Caco-2 (cell line): ENCODE measurements at regions of chr5 and their contacts with region 1.

Region 1: DNA sequence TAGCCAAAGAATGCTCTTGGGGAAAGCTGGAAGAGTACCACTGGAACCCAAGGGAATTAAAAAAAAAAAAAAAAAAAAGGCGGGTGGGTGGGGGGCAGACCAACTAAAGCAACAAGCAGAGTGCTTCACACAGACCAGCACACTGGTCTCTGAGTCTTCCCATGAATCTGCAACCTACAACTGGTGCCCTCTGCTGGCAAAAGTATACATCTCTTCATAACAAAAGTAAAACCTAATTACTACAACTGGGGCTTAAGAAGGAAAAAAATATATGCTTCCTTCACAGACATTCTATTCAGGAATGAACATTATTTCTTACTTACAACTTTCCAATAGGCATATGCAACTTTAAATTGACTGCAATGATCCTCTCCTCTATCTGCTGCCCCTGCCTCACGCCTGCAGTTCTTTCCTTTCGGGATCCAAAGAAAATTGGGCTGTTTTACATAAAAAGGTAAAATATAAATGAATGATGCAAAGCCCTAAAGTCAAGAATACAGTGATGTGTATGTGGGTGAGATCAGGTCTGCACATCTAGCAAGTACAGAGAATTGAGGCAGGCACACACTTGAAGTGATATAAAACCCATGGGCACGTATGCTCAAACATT is 7.2 kb upstream of the KLHL3 start:
- DNase-seq: peak; percentile 65 to 70
- H3K4me3 ChIP-seq: no peak overlapping the region
- H3K4me3 Mint-ChIP-seq: no peak overlapping the region
- H3K27ac Mint-ChIP-seq: no peak overlapping the region
- H3K4me1 ChIP-seq: peaks cover 14% of the 10 kb centered on the region; the same call in 1 of the 2 replicates
- H3K4me1 Mint-ChIP-seq: no peaks in the 10 kb centered on the region
- H3K27me3 ChIP-seq: no peaks in the 10 kb centered on the region
- H3K27me3 Mint-ChIP-seq: no peaks in the 10 kb centered on the region
- CTCF ChIP-seq: peak; percentile 63 to 65

Region 2: GRCh38 chr5:137635521-137635921 is 107.6 kb before region 1 on chr5:
- CTCF ChIA-PET with region 1: interaction called, 78 read pairs
- POLR2A ChIA-PET with region 1: no interaction called
- intact Hi-C with region 1: no loop called
- DNase-seq: no peak
- H3K4me3 ChIP-seq: no peak overlapping the region
- H3K4me3 Mint-ChIP-seq: no peak overlapping the region
- H3K27ac Mint-ChIP-seq: no peak overlapping the region
- H3K4me1 ChIP-seq: no peaks in the 10 kb centered on the region
- H3K4me1 Mint-ChIP-seq: no peaks in the 10 kb centered on the region
- H3K27me3 ChIP-seq: no peaks in the 10 kb centered on the region
- H3K27me3 Mint-ChIP-seq: peaks cover 4% of the 10 kb centered on the region
- CTCF ChIP-seq: no peak

Region 3: GRCh38 chr5:137660349-137660817 is 82.8 kb before region 1 on chr5:
- CTCF ChIA-PET with region 1: interaction called, 93 read pairs
- POLR2A ChIA-PET with region 1: interaction called, 3 read pairs
- intact Hi-C with region 1: loop called (anchors 1 kb)
- DNase-seq: peak; percentile 77 to 78
- H3K4me3 ChIP-seq: no peak overlapping the region
- H3K4me3 Mint-ChIP-seq: no peak overlapping the region
- H3K27ac Mint-ChIP-seq: no peak overlapping the region
- H3K4me1 ChIP-seq: no peaks in the 10 kb centered on the region
- H3K4me1 Mint-ChIP-seq: no peaks in the 10 kb centered on the region
- H3K27me3 ChIP-seq: no peaks in the 10 kb centered on the region
- H3K27me3 Mint-ChIP-seq: peaks cover 2% of the 10 kb centered on the region
- CTCF ChIP-seq: peak; percentile 70 to 88

Region 4: GRCh38 chr5:137754126-137754960 is 11.2 kb after region 1 on chr5 and contains the start of gene HNRNPA0:
- CTCF ChIA-PET with region 1: interaction called, 18 read pairs
- POLR2A ChIA-PET with region 1: no interaction called
- intact Hi-C with region 1: no loop called
- DNase-seq: peak; percentile 97 to 98
- H3K4me3 ChIP-seq: peak within 1 kb of the TSS; percentile 91
- H3K4me3 Mint-ChIP-seq: peak within 1 kb of the TSS; percentile 97
- H3K27ac Mint-ChIP-seq: peak within 1 kb of the TSS; percentile 100
- H3K4me1 ChIP-seq: peaks cover 20% of the 10 kb centered on the region
- H3K4me1 Mint-ChIP-seq: no peaks in the 10 kb centered on the region
- H3K27me3 ChIP-seq: no peaks in the 10 kb centered on the region
- H3K27me3 Mint-ChIP-seq: no peaks in the 10 kb centered on the region
- CTCF ChIP-seq: no peak
- total RNA-seq, gene HNRNPA0: 41.9 and 42.5 TPM in 2 replicates

Region 5: GRCh38 chr5:138128334-138128733 is 385.2 kb after region 1 on chr5:
- CTCF ChIA-PET with region 1: interaction called, 13 read pairs
- POLR2A ChIA-PET with region 1: no interaction called
- intact Hi-C with region 1: no loop called
- DNase-seq: no peak
- H3K4me3 ChIP-seq: no peak overlapping the region
- H3K4me3 Mint-ChIP-seq: no peak overlapping the region
- H3K27ac Mint-ChIP-seq: no peak overlapping the region
- H3K4me1 ChIP-seq: 0 out of 2 replicates have a peak, but pooled peaks cover 6% of the 10 kb centered on the region
- H3K4me1 Mint-ChIP-seq: peaks cover 5% of the 10 kb centered on the region
- H3K27me3 ChIP-seq: no peaks in the 10 kb centered on the region
- H3K27me3 Mint-ChIP-seq: no peaks in the 10 kb centered on the region
- CTCF ChIP-seq: no peak